Panc1 (cell line): ENCODE measurements at regions of chr5 and their contacts with region 1.

Region 1: GRCh38 chr5:130455175-130455574 is 550.9 kb downstream of the CHSY3 start:
- DNase-seq: no peak
- ATAC-seq: no peak
- H3K4me3 ChIP-seq: no peak overlapping the region
- H3K27ac ChIP-seq: no peak overlapping the region
- H3K4me1 ChIP-seq: no peaks in the 10 kb centered on the region
- H3K27me3 ChIP-seq: no peaks in the 10 kb centered on the region
- CTCF ChIP-seq: no peak

Region 2: GRCh38 chr5:130912088-130912487 is 456.9 kb after region 1 on chr5:
- CTCF ChIA-PET with region 1: no interaction called
- POLR2A ChIA-PET with region 1: interaction called, 10 read pairs
- in situ Hi-C with region 1: no loop called
- intact Hi-C with region 1: no loop called
- DNase-seq: no peak
- ATAC-seq: no peak
- H3K4me3 ChIP-seq: no peak overlapping the region
- H3K27ac ChIP-seq: no peak overlapping the region
- H3K4me1 ChIP-seq: no peaks in the 10 kb centered on the region
- H3K27me3 ChIP-seq: no peaks in the 10 kb centered on the region
- CTCF ChIP-seq: peak; percentile 18; the same call in 1 of the 2 replicates